ENCODE measurements at regions of chr5 and their contacts with region 1.

Region 1: GRCh38 chr5:160508780-160509361 is 87.2 kb downstream of the PTTG1 start:
- DNase-seq: no peak
- ATAC-seq: peak; percentile 86
- H3K4me3 Mint-ChIP-seq: no peak overlapping the region
- H3K27ac Mint-ChIP-seq: no peak overlapping the region
- H3K4me1 Mint-ChIP-seq: peaks cover 26% of the 10 kb centered on the region
- H3K27me3 Mint-ChIP-seq: peaks cover 6% of the 10 kb centered on the region
- CTCF ChIP-seq: peak; percentile 33

Region 2: GRCh38 chr5:158679221-158679641 is 1829.6 kb before region 1 on chr5:
- CTCF ChIA-PET with region 1: no interaction called
- POLR2A ChIA-PET with region 1: no interaction called
- intact Hi-C with region 1: no loop called
- DNase-seq: no peak
- ATAC-seq: no peak
- H3K4me3 Mint-ChIP-seq: no peak overlapping the region
- H3K27ac Mint-ChIP-seq: no peak overlapping the region
- H3K4me1 Mint-ChIP-seq: peaks cover 28% of the 10 kb centered on the region
- H3K27me3 Mint-ChIP-seq: no peaks in the 10 kb centered on the region
- CTCF ChIP-seq: no peak

Region 3: GRCh38 chr5:160565376-160565775 is 56.5 kb after region 1 on chr5:
- CTCF ChIA-PET with region 1: no interaction called
- POLR2A ChIA-PET with region 1: no interaction called
- intact Hi-C with region 1: no loop called
- DNase-seq: no peak
- ATAC-seq: no peak
- H3K4me3 Mint-ChIP-seq: no peak overlapping the region
- H3K27ac Mint-ChIP-seq: no peak overlapping the region
- H3K4me1 Mint-ChIP-seq: no peaks in the 10 kb centered on the region
- H3K27me3 Mint-ChIP-seq: no peaks in the 10 kb centered on the region
- CTCF ChIP-seq: no peak

Region 4: DNA sequence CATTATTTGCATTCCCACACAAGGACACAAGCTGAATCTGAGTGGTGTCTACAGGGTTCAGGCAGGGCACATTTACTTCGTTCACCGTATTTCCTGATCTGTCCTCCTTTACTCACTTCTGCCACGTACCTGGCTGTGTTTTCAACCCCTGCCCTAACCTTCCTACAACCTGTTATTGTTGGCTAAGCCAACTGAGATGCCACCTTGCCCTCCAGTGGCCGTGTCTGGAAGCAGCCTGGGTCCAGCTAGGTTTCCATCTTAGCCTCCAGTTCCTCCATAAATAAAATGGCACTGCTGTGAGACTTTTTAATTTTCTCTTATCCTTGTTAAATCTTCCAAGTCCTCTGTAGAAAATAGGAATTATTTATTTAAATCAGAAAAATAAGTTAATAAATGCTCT is 278.4 kb after region 1 on chr5:
- CTCF ChIA-PET with region 1: interaction called, 3 read pairs
- POLR2A ChIA-PET with region 1: no interaction called
- intact Hi-C with region 1: loop called (anchors 1 kb)
- DNase-seq: no peak
- ATAC-seq: no peak
- H3K4me3 Mint-ChIP-seq: no peak overlapping the region
- H3K27ac Mint-ChIP-seq: no peak overlapping the region
- H3K4me1 Mint-ChIP-seq: no peaks in the 10 kb centered on the region
- H3K27me3 Mint-ChIP-seq: no peaks in the 10 kb centered on the region
- CTCF ChIP-seq: no peak

Region 5: DNA sequence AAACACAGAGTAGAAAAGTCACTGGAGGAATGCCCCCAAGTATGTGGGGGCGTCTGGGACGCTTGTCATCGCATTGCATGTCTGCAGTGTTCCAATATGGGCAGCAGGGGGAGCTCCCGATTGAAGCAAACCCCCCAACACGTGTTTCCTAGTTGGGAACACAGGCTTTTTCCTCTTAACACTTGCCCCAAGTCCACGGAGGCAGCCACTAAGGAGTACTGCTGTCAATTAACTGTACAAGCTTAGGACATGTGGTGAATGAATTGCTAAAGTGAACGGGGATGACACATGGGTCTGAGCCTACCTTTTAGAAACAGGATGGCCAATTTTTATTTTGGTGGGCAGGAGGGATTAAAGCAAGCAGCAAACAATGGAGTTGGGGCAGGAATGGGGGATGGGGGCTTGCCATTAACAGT is 1035.5 kb after region 1 on chr5:
- CTCF ChIA-PET with region 1: no interaction called
- POLR2A ChIA-PET with region 1: no interaction called
- intact Hi-C with region 1: loop called (anchors 10 kb)
- DNase-seq: no peak
- ATAC-seq: no peak
- H3K4me3 Mint-ChIP-seq: no peak overlapping the region
- H3K27ac Mint-ChIP-seq: no peak overlapping the region
- H3K4me1 Mint-ChIP-seq: peaks cover 23% of the 10 kb centered on the region
- H3K27me3 Mint-ChIP-seq: peaks cover 38% of the 10 kb centered on the region
- CTCF ChIP-seq: no peak

Region 6: DNA sequence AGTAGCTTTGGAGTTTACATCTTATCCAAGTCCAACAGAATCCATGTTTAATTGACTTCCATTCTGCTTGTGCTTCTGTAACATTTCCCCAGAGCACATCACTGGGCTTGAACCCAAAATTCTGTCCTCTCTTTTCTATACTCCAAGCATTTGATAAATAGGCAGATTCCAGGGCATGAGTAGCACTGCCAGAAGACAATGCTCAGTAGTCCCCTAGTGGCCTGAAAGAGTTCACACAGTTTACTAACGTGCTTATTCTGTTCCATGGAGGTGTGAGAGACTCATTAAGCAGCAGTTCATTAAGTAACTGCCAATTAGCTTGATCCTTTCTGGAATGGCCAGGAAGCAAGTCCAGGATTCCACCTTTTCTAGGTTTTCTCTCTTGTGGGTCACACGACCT is 1167.2 kb after region 1 on chr5:
- CTCF ChIA-PET with region 1: no interaction called
- POLR2A ChIA-PET with region 1: no interaction called
- intact Hi-C with region 1: loop called (anchors 2 kb)
- DNase-seq: no peak
- ATAC-seq: no peak
- H3K4me3 Mint-ChIP-seq: no peak overlapping the region
- H3K27ac Mint-ChIP-seq: no peak overlapping the region
- H3K4me1 Mint-ChIP-seq: no peaks in the 10 kb centered on the region
- H3K27me3 Mint-ChIP-seq: no peaks in the 10 kb centered on the region
- CTCF ChIP-seq: no peak